Activated T-helper 1 cell treated with anti-CD3 and anti-CD28 coated beads, Interleukin-12 subunit alpha, Interleukin-12 subunit beta, Interleukin-2, Interleukin-4 antibody, amounts not matched to agents 30 ng/mL and 10 ng/mL and 1 ng/mL, durations not matched to agents 14 hours and 24 hours and 36 hours (primary cell): ENCODE measurements at regions of chr9 and their contacts with region 1.

Region 1: GRCh38 chr9:114930056-114930812 is at the start of gene TNFSF8:
- DNase-seq: peak; percentile 73
- H3K4me3 Mint-ChIP-seq: peak within 1 kb of the TSS; percentile 98
- H3K27ac Mint-ChIP-seq: peak within 1 kb of the TSS; percentile 99
- H3K4me1 Mint-ChIP-seq: peaks cover 62% of the 10 kb centered on the region
- H3K27me3 Mint-ChIP-seq: no peaks in the 10 kb centered on the region
- total RNA-seq, gene TNFSF8: 200 and 207 TPM in 2 replicates

Region 2: GRCh38 chr9:114691046-114691955 is 238.9 kb before region 1 on chr9:
- intact Hi-C with region 1: loop called (anchors 2 kb)
- DNase-seq: peak; percentile 80
- H3K4me3 Mint-ChIP-seq: peak overlapping the region; percentile 69
- H3K27ac Mint-ChIP-seq: peak overlapping the region; percentile 98
- H3K4me1 Mint-ChIP-seq: peaks cover 93% of the 10 kb centered on the region
- H3K27me3 Mint-ChIP-seq: no peaks in the 10 kb centered on the region

Region 3: DNA sequence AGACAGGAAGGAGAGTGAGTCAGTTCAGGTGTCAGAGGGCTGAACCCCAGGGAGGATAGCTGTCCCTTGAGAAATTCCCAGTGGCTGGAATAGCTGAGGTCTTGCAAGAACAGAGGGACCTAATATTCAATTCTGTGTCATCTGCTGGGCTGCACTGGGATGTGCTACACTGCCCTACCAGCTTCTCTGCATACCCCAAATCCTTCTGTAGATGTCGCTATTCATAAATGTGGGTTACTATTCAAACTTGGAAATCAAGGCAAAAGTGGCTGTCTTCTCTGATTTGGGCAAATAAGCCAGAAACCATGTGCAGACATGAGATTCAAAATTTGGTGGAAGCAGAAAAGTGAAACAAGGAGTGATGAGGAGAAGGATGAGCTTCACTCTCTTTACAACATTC is 16.1 kb before region 1 on chr9:
- intact Hi-C with region 1: loop called (anchors 1 kb)
- DNase-seq: no peak
- H3K4me3 Mint-ChIP-seq: no peak overlapping the region
- H3K27ac Mint-ChIP-seq: peak overlapping the region; percentile 70
- H3K4me1 Mint-ChIP-seq: peaks cover 97% of the 10 kb centered on the region
- H3K27me3 Mint-ChIP-seq: no peaks in the 10 kb centered on the region

Region 4: DNA sequence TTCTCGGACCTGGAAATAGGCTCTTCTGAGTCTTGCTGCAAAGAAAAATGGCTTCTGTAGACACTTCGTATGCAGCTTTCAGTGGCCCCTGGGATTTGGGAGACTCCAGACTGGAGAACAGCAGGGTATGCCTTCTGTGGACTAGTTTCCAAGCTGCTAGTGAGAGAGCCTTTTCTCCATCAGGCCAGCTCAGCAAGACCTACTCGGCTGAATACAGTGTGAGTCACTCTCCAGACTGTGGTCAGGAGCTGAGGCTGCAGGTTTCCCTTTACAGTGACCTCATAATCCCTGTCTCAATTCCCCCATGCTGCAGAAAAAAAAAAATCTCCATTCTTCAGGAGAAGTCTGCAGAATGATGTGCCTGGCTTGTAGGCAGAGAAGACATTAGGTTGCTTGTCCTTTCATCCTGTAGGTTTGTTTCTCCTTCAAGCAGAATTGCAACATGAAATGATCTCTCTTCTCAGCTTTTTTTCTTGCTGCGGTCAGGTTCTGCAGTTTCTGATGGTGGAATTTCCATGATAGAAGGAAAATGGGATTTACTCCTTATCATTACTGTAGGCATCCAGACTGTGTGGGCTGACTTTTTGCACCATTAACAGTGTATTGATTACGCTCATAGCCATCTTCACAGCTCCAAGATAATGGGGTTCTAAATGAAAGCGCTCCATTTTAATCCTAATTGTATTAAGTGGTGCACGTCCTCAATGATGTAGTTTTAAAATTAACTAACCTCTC is 78.5 kb after region 1 on chr9:
- intact Hi-C with region 1: loop called (anchors 1 kb)
- DNase-seq: peak; percentile 23
- H3K4me3 Mint-ChIP-seq: no peak overlapping the region
- H3K27ac Mint-ChIP-seq: no peak overlapping the region
- H3K4me1 Mint-ChIP-seq: peaks cover 97% of the 10 kb centered on the region
- H3K27me3 Mint-ChIP-seq: no peaks in the 10 kb centered on the region

Region 5: DNA sequence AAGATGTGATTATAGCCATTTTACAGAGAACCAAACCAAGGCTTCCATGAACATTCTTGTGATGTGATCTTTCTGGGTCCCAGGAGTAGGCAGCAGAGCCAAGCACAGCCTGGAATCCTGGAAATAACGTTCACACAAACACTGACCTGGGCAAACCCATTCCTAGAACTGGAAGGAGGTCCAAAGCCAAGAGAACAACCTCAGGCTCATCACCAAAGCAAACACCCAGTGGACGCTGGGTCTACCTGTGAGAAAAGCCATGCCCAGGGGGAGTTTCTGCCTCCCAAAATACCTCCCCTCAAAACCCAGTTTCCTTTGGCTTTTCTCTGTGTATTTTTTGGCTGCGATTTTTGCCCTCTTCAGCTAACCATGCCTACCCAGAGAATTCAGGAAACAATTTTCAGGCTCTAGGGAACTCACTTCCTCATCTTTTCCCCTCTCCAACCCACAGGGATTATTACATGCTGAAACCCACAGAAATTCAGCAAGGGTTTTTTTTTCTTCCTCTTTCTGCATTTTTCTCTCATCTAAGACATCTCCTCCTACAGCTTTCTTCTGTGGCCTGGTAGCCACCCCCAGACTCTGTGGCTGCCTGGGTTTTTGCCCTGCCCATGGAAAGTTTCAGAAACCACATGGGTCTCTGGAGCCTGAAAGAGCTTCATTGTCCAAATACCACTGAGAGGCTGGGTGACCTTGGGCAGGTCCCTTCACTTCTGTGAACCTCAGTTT is 112.7 kb after region 1 on chr9:
- intact Hi-C with region 1: loop called (anchors 1 kb)
- DNase-seq: peak; percentile 7
- H3K4me3 Mint-ChIP-seq: peak overlapping the region; percentile 1
- H3K27ac Mint-ChIP-seq: peak overlapping the region; percentile 78
- H3K4me1 Mint-ChIP-seq: peaks cover 47% of the 10 kb centered on the region
- H3K27me3 Mint-ChIP-seq: peaks cover 17% of the 10 kb centered on the region